CD4-positive, alpha-beta T cell (primary cell): ENCODE measurements at regions of chr10 and their contacts with region 1.

Region 1: GRCh38 chr10:4043897-4044665 is 259.1 kb upstream of the KLF6 start:
- DNase-seq: no peak
- ATAC-seq: no peak
- H3K4me3 ChIP-seq: no peak overlapping the region
- H3K4me3 Mint-ChIP-seq: no peak overlapping the region
- H3K27ac ChIP-seq: no peak overlapping the region
- H3K27ac Mint-ChIP-seq: no peak overlapping the region
- H3K4me1 ChIP-seq: no peaks in the 10 kb centered on the region
- H3K4me1 Mint-ChIP-seq: no peaks in the 10 kb centered on the region
- H3K27me3 ChIP-seq: no peaks in the 10 kb centered on the region
- H3K27me3 Mint-ChIP-seq: no peaks in the 10 kb centered on the region
- CTCF ChIP-seq: no peak

Region 2: GRCh38 chr10:3010816-3011460 is 1033.1 kb before region 1 on chr10:
- CTCF ChIA-PET with region 1: no interaction called
- POLR2A ChIA-PET with region 1: no interaction called
- intact Hi-C with region 1: no loop called
- DNase-seq: no peak
- ATAC-seq: no peak
- H3K4me3 ChIP-seq: no peak overlapping the region
- H3K4me3 Mint-ChIP-seq: no peak overlapping the region
- H3K27ac ChIP-seq: no peak overlapping the region
- H3K27ac Mint-ChIP-seq: no peak overlapping the region
- H3K4me1 ChIP-seq: no peaks in the 10 kb centered on the region
- H3K4me1 Mint-ChIP-seq: no peaks in the 10 kb centered on the region
- H3K27me3 ChIP-seq: peaks cover 4 to 6% of the 10 kb centered on the region in 2 experiments
- H3K27me3 Mint-ChIP-seq: peaks cover 63% of the 10 kb centered on the region
- CTCF ChIP-seq: no peak

Region 3: GRCh38 chr10:3579845-3580244 is 464.2 kb before region 1 on chr10:
- CTCF ChIA-PET with region 1: no interaction called
- POLR2A ChIA-PET with region 1: no interaction called
- intact Hi-C with region 1: loop called in 1 of 2 experiments (anchors 5 kb)
- DNase-seq: no peak
- ATAC-seq: no peak
- H3K4me3 ChIP-seq: no peak overlapping the region
- H3K4me3 Mint-ChIP-seq: no peak overlapping the region
- H3K27ac ChIP-seq: no peak overlapping the region
- H3K27ac Mint-ChIP-seq: no peak overlapping the region
- H3K4me1 ChIP-seq: no peaks in the 10 kb centered on the region
- H3K4me1 Mint-ChIP-seq: peaks cover 7% of the 10 kb centered on the region
- H3K27me3 ChIP-seq: no peaks in the 10 kb centered on the region
- H3K27me3 Mint-ChIP-seq: no peaks in the 10 kb centered on the region
- CTCF ChIP-seq: no peak

Region 4: GRCh38 chr10:3622427-3622826 is 421.7 kb before region 1 on chr10:
- CTCF ChIA-PET with region 1: no interaction called
- POLR2A ChIA-PET with region 1: no interaction called
- intact Hi-C with region 1: no loop called
- DNase-seq: peak in 3 of 14 experiments; percentile 9 to 15 (median 10)
- ATAC-seq: no peak
- H3K4me3 ChIP-seq: no peak overlapping the region
- H3K4me3 Mint-ChIP-seq: no peak overlapping the region
- H3K27ac ChIP-seq: no peak overlapping the region
- H3K27ac Mint-ChIP-seq: no peak overlapping the region
- H3K4me1 ChIP-seq: peaks cover 8% of the 10 kb centered on the region
- H3K4me1 Mint-ChIP-seq: peaks cover 19% of the 10 kb centered on the region
- H3K27me3 ChIP-seq: no peaks in the 10 kb centered on the region
- H3K27me3 Mint-ChIP-seq: no peaks in the 10 kb centered on the region
- CTCF ChIP-seq: no peak

Region 5: GRCh38 chr10:4067531-4067930 is 23.4 kb after region 1 on chr10:
- CTCF ChIA-PET with region 1: no interaction called
- POLR2A ChIA-PET with region 1: no interaction called
- intact Hi-C with region 1: no loop called
- DNase-seq: peak in 3 of 14 experiments; percentile 30 to 51 (median 38)
- ATAC-seq: no peak
- H3K4me3 ChIP-seq: no peak overlapping the region
- H3K4me3 Mint-ChIP-seq: no peak overlapping the region
- H3K27ac ChIP-seq: no peak overlapping the region
- H3K27ac Mint-ChIP-seq: no peak overlapping the region
- H3K4me1 ChIP-seq: peaks cover 17% of the 10 kb centered on the region
- H3K4me1 Mint-ChIP-seq: no peaks in the 10 kb centered on the region
- H3K27me3 ChIP-seq: no peaks in the 10 kb centered on the region
- H3K27me3 Mint-ChIP-seq: no peaks in the 10 kb centered on the region
- CTCF ChIP-seq: no peak

Region 6: DNA sequence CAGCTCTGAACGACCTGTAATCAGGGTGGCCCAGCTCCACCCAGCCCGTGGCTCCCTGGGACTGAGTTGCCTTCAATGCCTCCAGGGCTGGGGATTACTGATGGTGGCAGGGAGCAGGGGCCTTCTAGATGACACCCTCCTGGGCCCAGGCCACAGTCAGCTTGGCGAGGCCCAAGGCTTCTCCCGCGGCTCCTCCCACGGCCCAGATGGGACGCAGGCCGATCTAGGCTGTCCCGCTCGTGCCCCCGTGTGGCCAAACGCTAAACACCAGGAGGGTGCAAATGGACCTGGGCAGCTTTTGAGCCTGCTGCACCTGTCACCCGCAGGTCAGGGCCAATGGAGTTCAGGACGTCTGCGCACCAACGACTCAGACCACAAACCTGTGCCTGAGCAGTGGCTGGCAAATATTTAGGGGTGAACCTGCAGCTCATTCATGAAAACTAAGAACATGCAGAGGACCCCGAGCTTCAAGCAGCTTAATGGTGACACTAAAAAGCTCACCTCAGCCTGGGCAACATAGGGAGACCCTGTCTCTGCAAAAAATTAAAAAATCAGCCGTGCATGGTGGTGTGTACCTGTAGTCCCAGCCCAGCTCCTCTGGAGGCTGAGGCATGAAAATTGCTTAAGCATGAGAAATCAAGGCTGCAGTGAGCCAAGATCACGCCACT is 1579.1 kb after region 1 on chr10:
- CTCF ChIA-PET with region 1: no interaction called
- POLR2A ChIA-PET with region 1: no interaction called
- intact Hi-C with region 1: no loop called
- DNase-seq: peak; percentile 66 to 89 (median 78)
- ATAC-seq: peak; percentile 100
- H3K4me3 ChIP-seq: no peak overlapping the region
- H3K4me3 Mint-ChIP-seq: no peak overlapping the region
- H3K27ac ChIP-seq: no peak overlapping the region
- H3K27ac Mint-ChIP-seq: no peak overlapping the region
- H3K4me1 ChIP-seq: peaks cover 6% of the 10 kb centered on the region
- H3K4me1 Mint-ChIP-seq: no peaks in the 10 kb centered on the region
- H3K27me3 ChIP-seq: no peaks in the 10 kb centered on the region
- H3K27me3 Mint-ChIP-seq: no peaks in the 10 kb centered on the region
- CTCF ChIP-seq: peak; percentile 89